ENCODE measurements at regions of chr20 and their contacts with region 1.

Region 1: DNA sequence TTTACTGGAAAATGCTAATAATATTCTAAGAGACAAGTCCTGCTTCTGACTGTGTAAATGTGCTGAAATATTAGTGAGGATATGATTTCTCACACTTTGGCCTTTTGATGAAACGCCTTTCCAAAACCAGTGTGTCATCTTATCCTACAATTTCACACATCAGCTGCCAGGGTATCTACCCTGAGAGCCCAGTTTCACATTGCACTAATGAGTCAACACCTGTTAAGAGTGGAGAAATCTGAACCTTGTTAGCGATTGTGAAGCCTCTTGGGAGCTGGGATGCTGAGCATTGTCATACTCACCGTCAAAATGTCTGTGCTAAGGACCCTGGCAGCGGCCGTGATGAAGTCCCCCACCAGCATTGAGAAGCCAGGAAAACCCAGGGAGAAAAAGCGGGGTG is 166.0 kb downstream of the RALGAPA2 start:
- DNase-seq: peak; percentile 54 to 69
- ATAC-seq: peak; percentile 99 to 100
- H3K4me3 ChIP-seq: no peak overlapping the region
- H3K27ac ChIP-seq: peak overlapping the region in 3 of 4 donors; percentile 38 to 61 (median 40)
- H3K4me1 ChIP-seq: peaks cover 0 to 12% of the 10 kb centered on the region in 2 donors
- H3K27me3 ChIP-seq: no peaks in the 10 kb centered on the region
- CTCF ChIP-seq: no peak
- POLR2A ChIP-seq: no peak

Region 2: DNA sequence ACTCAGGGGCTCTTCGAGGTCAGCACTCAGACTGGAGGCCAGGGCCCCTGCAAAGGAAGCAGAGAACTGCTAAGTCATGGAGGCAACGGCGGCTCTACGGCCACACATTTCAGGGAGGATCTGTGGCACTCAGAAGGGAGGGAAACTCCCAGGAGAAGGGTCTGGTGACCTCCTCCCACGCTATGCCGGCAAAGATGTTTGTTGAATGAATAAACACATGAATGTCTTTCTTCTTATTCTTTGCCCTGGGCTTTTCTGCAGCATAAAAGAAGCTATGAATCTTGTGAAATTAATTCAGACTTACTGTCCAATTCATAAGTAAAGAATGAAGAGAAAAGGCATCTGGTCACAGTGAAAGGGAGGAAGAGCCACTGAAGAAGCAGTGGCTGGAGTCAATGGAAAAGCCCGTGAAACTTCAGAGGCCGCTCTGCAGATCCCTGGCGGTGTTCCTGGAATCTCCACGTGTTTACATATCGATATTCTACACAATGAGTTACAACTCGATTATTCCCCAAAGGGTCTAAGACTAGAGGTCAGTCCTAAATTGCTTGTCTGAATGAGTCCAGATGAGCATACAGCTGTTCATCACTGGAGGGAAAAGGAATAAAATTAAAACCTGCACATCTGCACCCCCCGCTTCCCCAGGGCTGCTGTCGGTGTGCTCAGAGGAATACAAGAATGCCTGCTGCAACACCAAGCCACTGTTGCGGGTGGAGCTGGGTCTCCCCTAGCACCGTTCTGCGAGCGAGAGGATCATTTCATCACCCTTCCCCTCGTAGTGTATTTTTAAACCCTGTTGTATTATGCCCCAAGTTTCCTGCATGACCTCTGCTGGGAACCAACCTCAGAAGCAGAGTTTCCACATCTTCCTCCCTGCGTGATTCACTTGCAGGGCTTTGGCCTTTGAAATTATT is 152.9 kb before region 1 on chr20:
- in situ Hi-C with region 1: no loop called
- intact Hi-C with region 1: no loop called
- DNase-seq: no peak
- ATAC-seq: no peak
- H3K4me3 ChIP-seq: no peak overlapping the region
- H3K27ac ChIP-seq: no peak overlapping the region
- H3K4me1 ChIP-seq: no peaks in the 10 kb centered on the region
- H3K27me3 ChIP-seq: no peaks in the 10 kb centered on the region
- CTCF ChIP-seq: no peak
- POLR2A ChIP-seq: no peak

Region 3: GRCh38 chr20:20519269-20519668 is 27.1 kb before region 1 on chr20:
- in situ Hi-C with region 1: no loop called
- intact Hi-C with region 1: loop called (anchors 1 kb)
- DNase-seq: peak; percentile 71 to 88
- ATAC-seq: peak; percentile 96 to 97
- H3K4me3 ChIP-seq: no peak overlapping the region
- H3K27ac ChIP-seq: peak overlapping the region; percentile 58 to 79 (median 70)
- H3K4me1 ChIP-seq: peaks cover 0 to 15% of the 10 kb centered on the region in 2 donors
- H3K27me3 ChIP-seq: no peaks in the 10 kb centered on the region
- CTCF ChIP-seq: no peak
- POLR2A ChIP-seq: no peak

Measured in gastrocnemius medialis (tissue), 4 donors.